ENCODE measurements at regions of chr7 and their contacts with region 1.

Region 1: GRCh38 chr7:155344600-155345433 is 47.1 kb downstream of the INSIG1 start:
- DNase-seq: peak; percentile 67 to 91 (median 74)
- ATAC-seq: peak; percentile 67 to 99 (median 90)
- H3K4me3 ChIP-seq: peak overlapping the region in 10 of 12 donors; percentile 16 to 53 (median 42)
- H3K27ac ChIP-seq: no peak overlapping the region
- H3K4me1 ChIP-seq: peaks cover 0 to 10% (median 4%) of the 10 kb centered on the region in 12 donors
- H3K27me3 ChIP-seq: peaks cover 5 to 21% (median 7%) of the 10 kb centered on the region in 9 donors
- CTCF ChIP-seq: peak in 11 of 12 donors; percentile 65 to 97 (median 89)
- POLR2A ChIP-seq: peak in 1 of 2 donors; percentile 6

Region 2: GRCh38 chr7:154913638-154914312 is 431.0 kb before region 1 on chr7:
- intact Hi-C with region 1: loop called in 1 of 10 experiments (anchors 5 kb)
- DNase-seq: peak; percentile 79 to 93 (median 84)
- ATAC-seq: peak; percentile 85 to 98 (median 92)
- H3K4me3 ChIP-seq: peak overlapping the region in 11 of 12 donors; percentile 17 to 57 (median 44)
- H3K27ac ChIP-seq: no peak overlapping the region
- H3K4me1 ChIP-seq: peaks cover 0 to 14% (median 7%) of the 10 kb centered on the region in 12 donors
- H3K27me3 ChIP-seq: peaks cover 11 to 41% (median 16%) of the 10 kb centered on the region in 9 donors
- CTCF ChIP-seq: peak; percentile 82 to 95 (median 92)
- POLR2A ChIP-seq: no peak

Region 3: DNA sequence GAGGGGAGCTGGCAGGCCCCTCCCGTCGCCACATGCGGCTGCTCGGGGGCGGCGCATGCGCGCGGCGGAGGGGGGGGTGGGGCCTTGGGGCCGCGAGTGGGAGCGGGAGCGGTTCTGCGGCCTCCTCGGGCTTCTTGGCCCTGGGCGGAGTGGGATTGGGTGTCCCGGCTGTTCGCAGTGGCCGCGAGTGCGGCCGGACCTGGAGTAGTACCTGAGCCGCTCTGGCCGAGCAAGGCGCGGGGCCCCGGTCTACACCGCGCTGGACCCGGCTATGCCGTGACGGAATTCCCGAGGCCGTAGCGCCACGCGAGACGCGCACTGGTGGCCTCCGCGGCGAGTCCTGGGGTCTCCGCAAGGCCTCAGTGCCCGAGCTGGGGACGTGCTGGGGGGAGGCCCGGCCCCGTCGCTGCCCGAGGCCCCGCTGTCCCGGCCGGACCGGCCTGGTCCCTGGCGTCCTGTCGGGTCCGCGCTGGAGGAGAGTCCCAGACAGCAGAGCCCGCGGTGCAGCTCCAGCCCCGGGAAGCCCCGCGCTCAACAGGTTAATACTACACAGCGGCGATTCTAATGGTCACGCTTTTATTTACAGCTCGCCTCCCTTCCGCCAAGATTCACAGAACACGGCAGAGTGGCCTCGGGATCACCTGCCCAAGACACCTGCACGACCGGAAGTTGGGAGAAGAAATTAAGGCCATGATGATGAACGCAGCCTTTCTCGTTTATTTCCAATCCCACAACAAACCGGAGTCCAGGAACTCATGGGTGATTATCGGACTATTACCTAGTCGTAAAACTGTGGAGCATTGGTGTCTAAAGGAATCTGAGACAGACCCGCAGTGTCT is 341.2 kb before region 1 on chr7:
- intact Hi-C with region 1: loop called in 1 of 10 experiments (anchors 5 kb)
- DNase-seq: peak; percentile 78 to 90 (median 85)
- ATAC-seq: peak; percentile 90 to 98 (median 98)
- H3K4me3 ChIP-seq: peak overlapping the region; percentile 57 to 100 (median 95)
- H3K27ac ChIP-seq: peak overlapping the region; percentile 89 to 96 (median 92)
- H3K4me1 ChIP-seq: peaks cover 0 to 24% (median 15%) of the 10 kb centered on the region in 12 donors
- H3K27me3 ChIP-seq: no peaks in the 10 kb centered on the region
- CTCF ChIP-seq: no peak
- POLR2A ChIP-seq: peak in 1 of 2 donors; percentile 78

Region 4: DNA sequence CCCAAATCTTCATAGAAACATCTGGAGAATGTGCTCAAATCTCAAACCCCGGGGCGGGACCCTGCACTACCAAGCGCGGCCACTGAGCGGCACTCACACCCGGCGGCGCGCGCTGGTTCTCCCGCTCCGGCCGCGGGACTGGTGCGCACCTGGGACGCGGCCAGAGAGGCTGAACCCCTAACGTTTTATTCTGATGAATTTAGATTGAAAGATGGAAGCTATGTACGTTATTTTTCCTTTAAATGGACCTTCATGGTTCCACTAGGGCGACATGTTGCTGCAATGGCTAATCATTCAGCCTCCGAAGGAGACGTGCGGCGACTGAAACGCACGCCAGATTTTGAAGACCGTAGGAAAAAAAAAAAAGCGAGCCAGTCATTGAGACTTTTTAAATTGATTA is 154.1 kb before region 1 on chr7:
- intact Hi-C with region 1: loop called (anchors 1 to 2 kb)
- DNase-seq: peak in 1 of 5 donors; percentile 49
- ATAC-seq: peak in 3 of 4 donors; percentile 69 to 75 (median 73)
- H3K4me3 ChIP-seq: peak overlapping the region in 3 of 12 donors; percentile 9 to 22 (median 12)
- H3K27ac ChIP-seq: no peak overlapping the region
- H3K4me1 ChIP-seq: peaks cover 0 to 5% (median 2%) of the 10 kb centered on the region in 12 donors
- H3K27me3 ChIP-seq: peaks cover 0 to 19% (median 7%) of the 10 kb centered on the region in 9 donors
- CTCF ChIP-seq: peak; percentile 80 to 93 (median 85)
- POLR2A ChIP-seq: no peak

Region 5: GRCh38 chr7:155205368-155206317 is 139.2 kb before region 1 on chr7:
- intact Hi-C with region 1: no loop called
- DNase-seq: peak; percentile 85 to 90 (median 88)
- ATAC-seq: peak; percentile 86 to 90 (median 87)
- H3K4me3 ChIP-seq: peak overlapping the region in 11 of 12 donors; percentile 16 to 58 (median 48)
- H3K27ac ChIP-seq: peak overlapping the region; percentile 74 to 97 (median 86)
- H3K4me1 ChIP-seq: peaks cover 0 to 22% (median 8%) of the 10 kb centered on the region in 12 donors
- H3K27me3 ChIP-seq: peaks cover 0 to 8% (median 0%) of the 10 kb centered on the region in 9 donors
- CTCF ChIP-seq: peak in 1 of 12 donors; percentile 14
- POLR2A ChIP-seq: peak in 1 of 2 donors; percentile 33

Region 6: DNA sequence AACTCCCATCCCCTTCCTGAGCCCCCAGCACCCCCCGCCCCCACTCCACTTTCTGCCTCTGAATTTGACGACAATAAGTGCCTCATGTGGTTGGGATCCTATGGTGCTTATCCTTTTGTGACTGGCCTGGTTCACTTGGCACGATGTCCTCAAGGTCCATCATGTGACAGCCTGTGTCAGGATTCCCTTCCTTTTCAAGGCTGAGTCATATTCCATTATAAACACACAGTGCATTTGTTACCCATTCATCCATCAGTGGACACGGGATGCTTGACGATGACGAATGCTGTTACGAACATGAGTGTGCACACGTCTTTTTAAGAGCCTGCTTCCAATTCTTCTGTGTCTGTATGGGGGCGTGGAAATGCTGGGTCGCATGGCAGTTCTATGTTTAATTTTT is 440.7 kb after region 1 on chr7:
- intact Hi-C with region 1: no loop called
- DNase-seq: no peak
- ATAC-seq: no peak
- H3K4me3 ChIP-seq: no peak overlapping the region
- H3K27ac ChIP-seq: no peak overlapping the region
- H3K4me1 ChIP-seq: peaks cover 0 to 14% (median 1%) of the 10 kb centered on the region in 12 donors
- H3K27me3 ChIP-seq: peaks cover 0 to 15% (median 0%) of the 10 kb centered on the region in 9 donors
- CTCF ChIP-seq: no peak
- POLR2A ChIP-seq: no peak